A549 (cell line): ENCODE measurements at regions of chr2 and their contacts with region 1.

Region 1: GRCh38 chr2:64330281-64331113 is 123.5 kb upstream of the LGALSL start:
- DNase-seq: peak in 1 of 2 experiments; percentile 88
- ATAC-seq: peak; percentile 64 to 87; a peak in 5 of 6 replicates
- H3K4me3 ChIP-seq: no peak overlapping the region
- H3K27ac ChIP-seq: no peak overlapping the region; a peak in 1 of 6 replicates
- H3K4me1 ChIP-seq: peaks cover 12% of the 10 kb centered on the region
- CTCF ChIP-seq: peak; percentile 98
- EP300 ChIP-seq: no peak
- POLR2A ChIP-seq: no peak
- RAD21 ChIP-seq: peak; percentile 99

Region 2: DNA sequence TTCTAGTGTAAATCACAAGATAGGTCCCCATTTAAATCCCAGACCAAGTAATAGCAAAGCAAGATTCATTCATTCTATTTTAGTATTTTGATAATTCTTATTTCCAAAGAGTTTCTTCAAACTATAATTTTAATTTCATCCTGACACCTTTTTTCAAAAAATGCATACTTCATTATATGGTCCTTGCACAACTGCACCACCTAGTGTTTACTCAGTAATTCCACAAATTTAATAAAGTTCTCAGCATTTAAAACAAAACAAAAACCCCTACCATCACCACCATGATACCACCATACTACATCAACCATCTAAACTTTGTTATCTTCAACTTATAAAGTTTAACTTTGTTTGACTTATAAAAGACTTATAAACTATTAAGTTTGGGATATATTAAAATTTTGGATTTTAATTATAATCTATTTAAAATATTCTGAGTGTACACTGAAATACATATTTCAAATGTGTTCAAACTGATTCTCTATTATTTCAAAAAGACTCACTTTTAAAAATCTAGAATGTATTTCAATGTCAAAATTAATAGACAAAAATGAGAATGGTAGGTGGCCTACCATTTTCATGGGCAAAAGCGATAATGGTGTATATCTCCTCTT is 786.4 kb before region 1 on chr2:
- CTCF ChIA-PET with region 1: no interaction called
- POLR2A ChIA-PET with region 1: no interaction called
- DNase-seq: peak; percentile 8 to 14
- ATAC-seq: no peak
- H3K4me3 ChIP-seq: no peak overlapping the region
- H3K27ac ChIP-seq: no peak overlapping the region
- H3K4me1 ChIP-seq: no peaks in the 10 kb centered on the region
- CTCF ChIP-seq: peak; percentile 82
- EP300 ChIP-seq: no peak
- POLR2A ChIP-seq: no peak
- RAD21 ChIP-seq: peak; percentile 60 to 69

Region 3: DNA sequence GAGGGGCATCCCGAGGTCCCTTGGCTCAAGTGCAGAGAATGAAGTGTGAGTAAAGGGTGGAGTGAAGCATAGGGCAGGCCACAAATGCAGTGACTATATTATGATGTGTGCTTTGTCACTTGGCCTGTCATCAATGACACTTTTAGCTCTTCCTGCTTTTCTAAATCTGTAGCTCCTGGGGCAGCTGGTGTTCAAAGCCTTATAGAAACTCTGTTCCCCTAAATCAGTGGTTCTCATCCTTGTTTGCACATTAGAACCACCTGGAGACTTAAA is 12.1 kb before region 1 on chr2:
- CTCF ChIA-PET with region 1: interaction called, 126 read pairs
- POLR2A ChIA-PET with region 1: no interaction called
- DNase-seq: no peak
- ATAC-seq: no peak
- H3K4me3 ChIP-seq: no peak overlapping the region
- H3K27ac ChIP-seq: no peak overlapping the region
- H3K4me1 ChIP-seq: no peaks in the 10 kb centered on the region
- CTCF ChIP-seq: no peak
- EP300 ChIP-seq: no peak
- POLR2A ChIP-seq: no peak
- RAD21 ChIP-seq: no peak

Region 4: GRCh38 chr2:64426183-64426952 is 95.9 kb after region 1 on chr2:
- CTCF ChIA-PET with region 1: no interaction called
- POLR2A ChIA-PET with region 1: no interaction called
- DNase-seq: no peak
- ATAC-seq: peak in 1 of 2 experiments; percentile 49; a peak in 2 of 6 replicates
- H3K4me3 ChIP-seq: no peak overlapping the region
- H3K27ac ChIP-seq: no peak overlapping the region
- H3K4me1 ChIP-seq: peaks cover 17% of the 10 kb centered on the region
- CTCF ChIP-seq: no peak
- EP300 ChIP-seq: no peak
- POLR2A ChIP-seq: no peak
- RAD21 ChIP-seq: no peak

Region 5: DNA sequence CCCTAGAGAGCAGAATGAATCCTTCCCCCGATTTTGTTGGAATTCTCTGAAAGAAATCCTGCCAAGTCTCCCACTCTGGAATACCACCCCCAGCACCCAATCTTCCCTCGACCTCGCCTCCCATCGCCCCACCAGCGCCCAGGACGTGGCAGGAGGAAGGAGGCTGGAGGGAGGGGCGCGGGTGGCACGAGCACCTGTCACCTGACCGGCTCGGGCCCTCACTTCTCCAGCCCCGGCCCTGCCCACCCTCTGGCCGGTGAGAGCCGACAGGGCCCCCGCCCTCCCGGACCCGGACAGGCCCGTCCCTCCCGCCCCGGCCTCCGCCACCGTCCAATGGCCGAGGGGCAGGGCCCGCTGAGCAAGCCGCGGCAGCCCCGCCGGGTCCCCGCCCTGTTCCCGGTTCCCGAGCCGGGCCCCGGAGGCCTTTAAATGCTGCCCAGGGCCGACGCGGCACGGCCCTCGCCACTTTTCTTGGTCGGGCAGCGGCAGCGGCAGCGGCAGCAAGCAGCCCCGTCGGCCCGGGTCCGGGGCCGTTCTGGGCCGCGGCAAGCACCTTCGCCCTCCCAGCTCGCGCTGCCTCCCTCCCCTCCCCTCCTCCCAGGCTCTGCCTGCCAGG is 123.4 kb after region 1 on chr2 and contains the start of gene LGALSL:
- CTCF ChIA-PET with region 1: interaction called, 15 read pairs
- POLR2A ChIA-PET with region 1: no interaction called
- DNase-seq: peak; percentile 76 to 78
- ATAC-seq: peak; percentile 88 to 92
- H3K4me3 ChIP-seq: peak within 1 kb of the TSS; percentile 85
- H3K27ac ChIP-seq: peak within 1 kb of the TSS; percentile 94 to 96
- H3K4me1 ChIP-seq: peaks cover 17% of the 10 kb centered on the region
- CTCF ChIP-seq: no peak
- EP300 ChIP-seq: no peak
- POLR2A ChIP-seq: no peak
- RAD21 ChIP-seq: no peak
- polyA plus RNA-seq, gene LGALSL: 12.7 and 14.1 TPM in 2 replicates

Region 6: GRCh38 chr2:64504774-64505720 is 174.6 kb after region 1 on chr2:
- CTCF ChIA-PET with region 1: interaction called, 59 read pairs
- POLR2A ChIA-PET with region 1: no interaction called
- DNase-seq: no peak
- ATAC-seq: no peak
- H3K4me3 ChIP-seq: no peak overlapping the region
- H3K27ac ChIP-seq: no peak overlapping the region
- H3K4me1 ChIP-seq: no peaks in the 10 kb centered on the region
- CTCF ChIP-seq: no peak
- EP300 ChIP-seq: no peak
- POLR2A ChIP-seq: no peak
- RAD21 ChIP-seq: no peak

Region 7: DNA sequence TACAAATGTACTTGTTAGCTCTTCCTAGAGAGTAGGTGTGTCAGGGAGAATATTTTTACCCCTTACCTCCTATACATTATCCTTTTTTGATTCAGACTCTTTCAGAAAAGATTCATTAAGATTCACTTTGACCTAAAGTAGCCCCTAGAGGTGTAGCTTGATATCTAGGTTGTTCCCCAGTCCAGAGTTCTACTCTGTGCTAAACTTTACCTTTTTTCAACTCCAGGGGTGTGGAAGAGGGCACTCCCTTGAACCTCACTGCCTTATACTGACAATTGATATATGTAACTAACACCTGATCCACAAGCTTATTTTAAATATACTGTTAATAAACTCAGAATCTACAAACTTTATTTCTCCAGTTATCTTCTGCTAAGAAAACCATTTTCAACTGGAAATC is 223.6 kb after region 1 on chr2:
- CTCF ChIA-PET with region 1: interaction called, 45 read pairs
- POLR2A ChIA-PET with region 1: no interaction called
- DNase-seq: no peak
- ATAC-seq: no peak
- H3K4me3 ChIP-seq: no peak overlapping the region
- H3K27ac ChIP-seq: no peak overlapping the region
- H3K4me1 ChIP-seq: peaks cover 7% of the 10 kb centered on the region; the same call in 1 of the 3 replicates
- CTCF ChIP-seq: no peak
- EP300 ChIP-seq: no peak
- POLR2A ChIP-seq: no peak
- RAD21 ChIP-seq: no peak

Region 8: GRCh38 chr2:64873472-64873924 is 543.0 kb after region 1 on chr2:
- CTCF ChIA-PET with region 1: interaction called, 17 read pairs
- POLR2A ChIA-PET with region 1: no interaction called
- DNase-seq: peak; percentile 65 to 73
- ATAC-seq: peak; percentile 83 to 94
- H3K4me3 ChIP-seq: no peak overlapping the region
- H3K27ac ChIP-seq: no peak overlapping the region
- H3K4me1 ChIP-seq: peaks cover 15% of the 10 kb centered on the region
- CTCF ChIP-seq: peak; percentile 95
- EP300 ChIP-seq: no peak
- POLR2A ChIP-seq: no peak
- RAD21 ChIP-seq: peak; percentile 94 to 97